ENCODE measurements at regions of chrX and their contacts with region 1.

Region 1: GRCh38 chrX:105190252-105190853 is 30.1 kb downstream of the TEX13A start:
- DNase-seq: peak; percentile 57
- H3K4me3 Mint-ChIP-seq: no peak overlapping the region
- H3K27ac Mint-ChIP-seq: no peak overlapping the region
- H3K4me1 Mint-ChIP-seq: no peaks in the 10 kb centered on the region
- H3K27me3 Mint-ChIP-seq: peaks cover 39% of the 10 kb centered on the region
- CTCF ChIP-seq: peak; percentile 74

Region 2: DNA sequence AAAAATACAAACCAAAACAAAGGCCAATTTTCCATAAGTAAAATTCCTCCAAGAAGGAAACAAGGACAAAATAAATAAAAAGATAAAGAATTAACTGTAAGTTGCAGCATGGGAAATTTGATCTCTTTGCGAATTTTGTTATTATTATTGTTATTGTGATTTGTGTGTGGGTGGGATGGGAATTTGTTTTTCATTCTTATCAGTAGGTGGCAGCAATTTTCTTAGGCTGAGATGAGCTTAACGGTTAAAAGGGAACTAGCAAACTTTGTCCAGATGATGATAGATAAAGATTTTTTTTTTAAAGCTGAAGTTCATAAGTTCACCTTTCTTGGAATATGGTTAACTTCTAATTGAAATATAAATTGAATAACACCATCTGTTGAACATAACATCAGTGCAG is 707.6 kb before region 1 on chrX:
- CTCF ChIA-PET with region 1: interaction called, 6 read pairs
- POLR2A ChIA-PET with region 1: no interaction called
- intact Hi-C with region 1: loop called (anchors 2 kb)
- DNase-seq: peak; percentile 13
- H3K4me3 Mint-ChIP-seq: no peak overlapping the region
- H3K27ac Mint-ChIP-seq: no peak overlapping the region
- H3K4me1 Mint-ChIP-seq: no peaks in the 10 kb centered on the region
- H3K27me3 Mint-ChIP-seq: peaks cover 44% of the 10 kb centered on the region
- CTCF ChIP-seq: peak; percentile 17

Region 3: GRCh38 chrX:104668550-104668949 is 521.8 kb before region 1 on chrX:
- CTCF ChIA-PET with region 1: interaction called, 32 read pairs
- POLR2A ChIA-PET with region 1: interaction called, 3 read pairs
- intact Hi-C with region 1: loop called (anchors 1 kb)
- DNase-seq: peak; percentile 35
- H3K4me3 Mint-ChIP-seq: no peak overlapping the region
- H3K27ac Mint-ChIP-seq: no peak overlapping the region
- H3K4me1 Mint-ChIP-seq: no peaks in the 10 kb centered on the region
- H3K27me3 Mint-ChIP-seq: peaks cover 45% of the 10 kb centered on the region
- CTCF ChIP-seq: no peak

Region 4: DNA sequence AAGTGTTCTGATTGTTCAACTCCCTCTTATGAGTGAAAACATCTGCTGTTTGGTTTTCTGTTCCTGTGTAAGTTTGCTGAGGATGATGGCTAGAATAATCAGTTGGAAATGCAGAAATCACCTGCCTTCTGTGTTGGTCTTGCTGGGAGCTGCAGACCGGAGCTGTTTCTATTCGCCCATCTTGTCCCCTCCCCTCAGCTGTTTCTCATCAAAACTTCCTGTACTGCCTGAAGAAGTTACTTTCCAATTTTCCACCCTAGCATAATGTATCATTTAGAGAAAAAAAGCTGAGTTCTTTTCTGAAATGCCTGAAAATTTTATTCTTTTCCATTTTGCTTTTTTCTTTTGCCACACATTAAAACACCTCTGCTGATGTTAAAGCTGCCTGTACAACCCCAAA is 137.4 kb before region 1 on chrX:
- CTCF ChIA-PET with region 1: no interaction called
- POLR2A ChIA-PET with region 1: no interaction called
- intact Hi-C with region 1: no loop called
- DNase-seq: no peak
- H3K4me3 Mint-ChIP-seq: no peak overlapping the region
- H3K27ac Mint-ChIP-seq: no peak overlapping the region
- H3K4me1 Mint-ChIP-seq: no peaks in the 10 kb centered on the region
- H3K27me3 Mint-ChIP-seq: peaks cover 26% of the 10 kb centered on the region
- CTCF ChIP-seq: no peak

Region 5: GRCh38 chrX:105173071-105173470 is 17.3 kb before region 1 on chrX:
- CTCF ChIA-PET with region 1: interaction called, 20 read pairs
- POLR2A ChIA-PET with region 1: no interaction called
- intact Hi-C with region 1: no loop called
- DNase-seq: no peak
- H3K4me3 Mint-ChIP-seq: no peak overlapping the region
- H3K27ac Mint-ChIP-seq: no peak overlapping the region
- H3K4me1 Mint-ChIP-seq: no peaks in the 10 kb centered on the region
- H3K27me3 Mint-ChIP-seq: peaks cover 47% of the 10 kb centered on the region
- CTCF ChIP-seq: no peak

Region 6: DNA sequence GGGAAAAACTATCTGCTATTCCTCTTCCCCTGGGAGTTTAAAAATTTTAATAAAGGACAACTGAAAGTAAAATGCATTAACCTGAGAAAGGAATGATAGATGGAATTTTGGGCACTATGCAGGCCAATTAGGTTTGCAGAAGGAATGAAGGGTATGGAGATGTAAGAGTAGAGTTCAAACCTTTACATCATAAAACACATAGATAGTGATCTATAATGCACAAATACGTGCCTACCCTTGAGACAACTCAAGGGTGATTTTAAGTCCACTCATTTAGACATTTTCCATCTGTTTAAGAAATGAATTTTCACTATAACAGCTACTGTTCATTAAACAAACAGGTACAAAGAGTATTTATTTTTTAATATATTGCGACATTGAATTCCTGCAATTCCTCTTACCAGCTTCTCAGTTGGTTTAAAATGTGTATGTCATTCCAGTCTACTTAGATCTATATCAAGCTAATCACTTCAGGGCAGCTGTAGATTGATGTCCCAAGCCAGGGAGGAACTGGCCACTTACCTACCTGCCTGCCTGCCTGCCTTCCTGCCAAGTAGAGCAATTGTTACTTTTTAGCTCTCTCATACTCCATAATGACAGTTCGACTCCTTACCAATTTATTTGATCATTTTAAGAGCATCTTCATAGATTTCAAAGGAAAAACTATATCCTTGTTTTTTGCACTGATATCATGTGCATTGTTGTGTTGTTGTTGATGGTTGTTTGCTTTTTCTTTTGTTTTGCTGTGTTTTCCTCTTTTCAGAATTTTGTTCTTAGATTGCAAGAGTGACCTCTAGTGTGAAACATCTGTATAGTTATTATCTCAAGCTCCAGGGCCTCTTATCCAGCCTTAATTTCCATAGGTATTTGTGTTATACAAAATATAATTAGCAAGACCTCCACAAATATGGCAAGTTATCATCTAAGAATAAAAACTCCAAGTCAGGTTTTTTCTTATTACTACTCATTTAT is 511.0 kb after region 1 on chrX:
- CTCF ChIA-PET with region 1: interaction called, 11 read pairs
- POLR2A ChIA-PET with region 1: no interaction called
- intact Hi-C with region 1: loop called (anchors 1 kb)
- DNase-seq: peak; percentile 14
- H3K4me3 Mint-ChIP-seq: peak overlapping the region; percentile 11
- H3K27ac Mint-ChIP-seq: peak overlapping the region; percentile 53
- H3K4me1 Mint-ChIP-seq: peaks cover 14% of the 10 kb centered on the region
- H3K27me3 Mint-ChIP-seq: peaks cover 73% of the 10 kb centered on the region
- CTCF ChIP-seq: peak; percentile 30

Measured in MCF 10A (cell line).